MCF 10A (cell line): ENCODE measurements at regions of chr6 and their contacts with region 1.

Region 1: DNA sequence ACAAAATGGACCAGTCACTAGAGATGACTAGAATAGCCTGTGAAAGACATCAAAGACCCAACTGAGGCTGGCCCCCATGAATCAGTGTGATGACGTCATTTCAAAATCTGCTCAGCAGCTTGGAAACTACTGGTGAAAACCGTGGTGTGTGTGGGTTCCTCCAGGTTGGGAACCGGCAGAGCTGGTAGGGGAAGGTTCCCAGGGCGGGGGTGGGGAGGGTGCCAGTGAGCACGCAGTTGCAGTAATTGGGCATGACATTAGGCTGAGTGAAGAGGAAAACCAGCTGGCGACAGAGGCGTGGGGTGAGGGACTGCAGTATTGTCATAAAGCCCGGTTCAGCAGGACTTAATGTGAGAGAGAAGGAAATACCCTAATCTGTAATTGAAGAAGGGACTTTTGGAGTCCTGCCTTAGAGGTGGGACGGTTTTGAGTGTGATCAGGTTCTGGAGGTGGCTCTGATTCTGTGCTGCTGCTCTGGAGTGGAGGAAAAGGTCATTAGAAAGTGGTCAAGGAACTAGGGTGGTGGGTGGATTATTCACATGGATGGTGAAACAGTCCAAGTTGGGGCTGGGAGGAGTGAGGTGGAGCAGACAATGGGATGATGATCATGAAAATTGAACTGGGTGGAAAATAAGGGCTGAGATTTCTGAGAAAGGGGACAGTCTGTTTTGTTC is 52.0 kb upstream of the MTHFD1L start:
- DNase-seq: peak; percentile 21
- H3K4me3 Mint-ChIP-seq: peak overlapping the region; percentile 7
- H3K27ac Mint-ChIP-seq: peak overlapping the region; percentile 60
- H3K4me1 Mint-ChIP-seq: peaks cover 23% of the 10 kb centered on the region
- H3K27me3 Mint-ChIP-seq: no peaks in the 10 kb centered on the region
- CTCF ChIP-seq: no peak

Region 2: GRCh38 chr6:149903938-149904611 is 909.4 kb before region 1 on chr6:
- CTCF ChIA-PET with region 1: no interaction called
- POLR2A ChIA-PET with region 1: no interaction called
- intact Hi-C with region 1: no loop called
- DNase-seq: no peak
- H3K4me3 Mint-ChIP-seq: no peak overlapping the region
- H3K27ac Mint-ChIP-seq: no peak overlapping the region
- H3K4me1 Mint-ChIP-seq: peaks cover 18% of the 10 kb centered on the region
- H3K27me3 Mint-ChIP-seq: no peaks in the 10 kb centered on the region
- CTCF ChIP-seq: no peak

Region 3: DNA sequence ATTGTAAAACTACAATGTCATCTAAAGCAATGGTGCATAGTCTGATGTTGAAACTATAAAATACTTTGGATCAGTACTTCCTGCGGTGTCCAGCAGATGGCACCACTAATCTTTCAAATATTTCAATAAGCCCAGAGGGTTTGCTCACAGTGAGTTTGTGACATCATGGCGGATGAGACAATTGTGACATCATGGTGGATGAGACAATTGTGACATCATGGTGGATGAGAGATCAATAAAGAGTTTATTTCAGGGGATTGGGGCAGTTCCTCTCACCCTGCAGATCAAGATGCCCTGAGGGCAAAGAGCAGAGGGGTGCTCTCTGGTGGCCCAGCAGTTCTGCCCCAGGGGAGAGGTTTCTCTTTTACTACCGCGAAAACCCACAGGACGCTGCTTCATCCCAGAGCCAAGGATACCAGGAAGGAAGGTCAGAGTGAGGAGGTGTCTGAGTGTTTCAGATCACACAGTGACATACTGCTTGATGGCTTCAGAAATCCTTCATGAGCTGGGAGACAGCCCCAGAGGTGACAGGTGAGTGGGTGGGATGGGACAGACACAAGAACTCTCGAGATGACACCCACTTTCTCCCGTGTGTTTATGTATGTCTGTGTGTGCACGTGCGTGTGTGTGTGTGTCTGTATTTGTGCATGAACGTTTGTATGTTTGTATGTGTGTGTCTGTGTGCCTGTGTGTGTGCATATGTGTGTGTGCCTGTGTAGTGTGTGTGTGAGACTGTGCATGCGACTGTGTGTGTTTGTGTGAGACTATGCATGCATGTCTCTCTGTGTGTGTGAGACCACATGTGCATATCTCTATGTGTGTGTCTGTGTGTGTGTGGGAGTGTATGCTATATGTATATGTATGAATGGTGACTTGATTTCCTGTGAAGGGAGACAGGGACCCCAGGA is 879.0 kb before region 1 on chr6:
- CTCF ChIA-PET with region 1: no interaction called
- POLR2A ChIA-PET with region 1: no interaction called
- intact Hi-C with region 1: loop called (anchors 1 kb)
- DNase-seq: peak; percentile 74
- H3K4me3 Mint-ChIP-seq: no peak overlapping the region
- H3K27ac Mint-ChIP-seq: no peak overlapping the region
- H3K4me1 Mint-ChIP-seq: peaks cover 23% of the 10 kb centered on the region
- H3K27me3 Mint-ChIP-seq: peaks cover 22% of the 10 kb centered on the region
- CTCF ChIP-seq: peak; percentile 67

Region 4: DNA sequence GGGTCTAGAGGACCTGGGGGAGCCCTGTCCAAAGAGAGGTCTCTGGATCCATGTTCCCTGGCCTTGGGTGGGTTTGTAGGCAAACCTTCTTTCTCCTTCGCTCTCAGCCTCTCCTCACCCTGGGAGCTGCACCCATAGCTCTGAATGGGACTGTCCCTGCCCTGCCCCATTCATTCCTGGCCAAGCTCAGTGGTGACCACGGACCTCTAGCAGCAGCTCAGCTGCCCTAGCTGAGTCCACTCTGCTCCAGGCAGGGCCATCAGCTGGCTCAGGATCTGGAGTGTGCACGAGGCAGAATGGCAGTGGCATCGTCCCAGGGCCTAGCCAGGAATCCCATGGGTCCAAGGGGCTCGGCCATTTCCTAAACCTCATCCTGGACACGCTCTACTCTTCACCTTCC is 749.8 kb before region 1 on chr6:
- CTCF ChIA-PET with region 1: no interaction called
- POLR2A ChIA-PET with region 1: no interaction called
- intact Hi-C with region 1: no loop called
- DNase-seq: no peak
- H3K4me3 Mint-ChIP-seq: no peak overlapping the region
- H3K27ac Mint-ChIP-seq: no peak overlapping the region
- H3K4me1 Mint-ChIP-seq: no peaks in the 10 kb centered on the region
- H3K27me3 Mint-ChIP-seq: peaks cover 4% of the 10 kb centered on the region
- CTCF ChIP-seq: no peak

Region 5: DNA sequence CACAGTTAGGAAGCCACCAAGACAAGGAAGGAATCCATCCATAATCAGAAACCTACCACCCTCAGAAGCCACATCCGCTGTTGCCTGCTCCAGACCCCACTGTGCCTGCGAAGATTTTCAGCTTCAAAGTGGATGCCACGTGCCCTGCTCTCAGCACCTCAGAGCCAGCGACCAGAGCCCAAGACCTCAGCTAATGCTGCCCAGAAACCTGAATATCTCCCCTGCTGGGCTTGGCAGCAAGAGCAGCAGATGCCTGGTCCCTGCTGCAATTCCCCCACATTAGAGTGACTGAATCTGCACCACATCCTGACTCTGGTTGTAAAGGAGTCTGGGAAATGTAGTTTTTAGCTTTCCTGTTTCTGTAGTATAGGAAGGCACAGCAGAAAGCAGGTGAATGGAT is 733.9 kb before region 1 on chr6:
- CTCF ChIA-PET with region 1: interaction called, 6 read pairs
- POLR2A ChIA-PET with region 1: no interaction called
- intact Hi-C with region 1: loop called (anchors 1 kb)
- DNase-seq: no peak
- H3K4me3 Mint-ChIP-seq: no peak overlapping the region
- H3K27ac Mint-ChIP-seq: no peak overlapping the region
- H3K4me1 Mint-ChIP-seq: peaks cover 6% of the 10 kb centered on the region
- H3K27me3 Mint-ChIP-seq: peaks cover 10% of the 10 kb centered on the region
- CTCF ChIP-seq: no peak

Region 6: GRCh38 chr6:150417899-150418826 is 395.3 kb before region 1 on chr6:
- CTCF ChIA-PET with region 1: interaction called, 133 read pairs
- POLR2A ChIA-PET with region 1: interaction called, 20 read pairs
- intact Hi-C with region 1: loop called (anchors 1 kb)
- DNase-seq: peak; percentile 84
- H3K4me3 Mint-ChIP-seq: peak overlapping the region; percentile 50
- H3K27ac Mint-ChIP-seq: peak overlapping the region; percentile 85
- H3K4me1 Mint-ChIP-seq: peaks cover 21% of the 10 kb centered on the region
- H3K27me3 Mint-ChIP-seq: no peaks in the 10 kb centered on the region
- CTCF ChIP-seq: peak; percentile 73

Region 7: DNA sequence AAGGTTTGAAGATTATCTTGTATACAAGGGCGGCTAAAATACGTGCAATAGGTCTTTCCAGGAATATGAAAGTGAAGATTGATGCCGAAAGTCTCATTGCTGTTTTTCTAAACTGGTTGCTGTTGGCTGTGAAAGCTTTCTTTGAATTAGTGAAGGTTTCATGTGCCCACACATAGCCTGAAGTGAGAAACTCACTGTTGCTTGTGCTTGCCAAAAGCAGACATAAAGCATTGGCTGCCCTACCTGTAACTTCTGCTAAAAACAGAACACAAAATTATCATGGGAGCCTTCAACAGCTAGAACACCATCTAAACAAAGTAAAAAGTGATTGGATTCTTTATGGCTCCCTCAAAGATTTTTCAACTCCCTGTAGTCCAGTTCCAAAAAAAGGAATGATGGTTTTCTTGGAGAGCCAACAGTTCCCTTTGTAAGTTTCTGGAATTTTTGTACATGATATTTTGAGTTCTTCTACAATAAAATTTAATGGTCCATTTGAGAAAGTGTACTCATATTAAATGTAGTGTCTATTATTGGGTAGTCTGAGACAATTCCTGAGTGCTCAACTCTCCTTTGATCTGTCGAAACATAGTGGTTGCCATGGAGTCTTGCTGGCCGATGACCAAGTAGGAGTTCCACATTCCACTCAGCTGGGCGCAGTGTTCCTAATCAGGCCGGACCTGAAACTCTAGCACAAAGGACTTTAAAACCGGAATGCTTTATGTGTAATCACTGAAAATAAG is 145.3 kb before region 1 on chr6:
- CTCF ChIA-PET with region 1: interaction called, 3 read pairs
- POLR2A ChIA-PET with region 1: interaction called, 3 read pairs
- intact Hi-C with region 1: loop called (anchors 2 kb)
- DNase-seq: peak; percentile 94
- H3K4me3 Mint-ChIP-seq: no peak overlapping the region
- H3K27ac Mint-ChIP-seq: peak overlapping the region; percentile 24
- H3K4me1 Mint-ChIP-seq: peaks cover 18% of the 10 kb centered on the region
- H3K27me3 Mint-ChIP-seq: no peaks in the 10 kb centered on the region
- CTCF ChIP-seq: peak; percentile 13

Region 8: GRCh38 chr6:150783813-150784212 is 29.6 kb before region 1 on chr6:
- CTCF ChIA-PET with region 1: no interaction called
- POLR2A ChIA-PET with region 1: no interaction called
- intact Hi-C with region 1: no loop called
- DNase-seq: no peak
- H3K4me3 Mint-ChIP-seq: no peak overlapping the region
- H3K27ac Mint-ChIP-seq: no peak overlapping the region
- H3K4me1 Mint-ChIP-seq: no peaks in the 10 kb centered on the region
- H3K27me3 Mint-ChIP-seq: no peaks in the 10 kb centered on the region
- CTCF ChIP-seq: no peak

Region 9: DNA sequence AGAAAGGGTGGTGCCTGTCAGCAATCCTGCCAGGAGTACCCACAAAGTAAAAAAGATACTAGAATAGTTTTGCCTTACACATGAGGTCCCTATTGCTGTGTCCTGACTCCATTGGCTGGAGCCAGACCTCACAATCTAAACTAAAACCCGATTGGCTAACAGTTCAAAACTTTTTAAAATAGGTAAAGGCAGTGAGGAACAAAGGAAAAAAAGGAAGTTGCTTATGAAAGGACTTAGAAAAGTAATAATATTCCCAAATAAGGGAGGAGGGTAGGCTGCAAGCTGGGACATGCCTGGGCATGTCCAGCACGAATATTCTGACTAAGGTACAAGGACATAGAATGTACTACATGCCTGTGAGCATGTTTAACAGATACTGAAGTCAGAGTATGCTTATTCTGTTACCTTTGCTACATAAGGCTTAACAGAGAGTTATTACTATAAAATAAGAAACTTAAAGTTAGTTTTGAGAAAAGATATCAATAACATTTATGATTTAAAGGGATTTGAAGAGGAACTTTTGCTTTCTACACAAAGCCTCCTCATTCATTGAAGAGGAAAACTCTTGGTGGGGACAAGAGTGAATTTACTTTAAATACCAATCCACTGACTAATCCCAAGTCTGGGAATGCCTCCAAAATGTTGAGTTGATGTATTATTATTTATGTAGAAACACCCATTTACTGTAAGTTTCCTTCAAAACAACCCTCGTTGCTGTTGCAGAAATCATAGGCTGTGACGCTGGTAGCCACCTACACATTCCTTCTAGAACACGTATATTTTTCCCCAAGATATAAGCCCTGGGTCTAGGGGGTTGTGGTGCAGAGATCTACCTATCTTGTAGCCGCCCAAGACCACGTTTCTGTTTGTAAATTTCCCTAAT is 43.8 kb after region 1 on chr6:
- CTCF ChIA-PET with region 1: interaction called, 28 read pairs
- POLR2A ChIA-PET with region 1: interaction called, 5 read pairs
- intact Hi-C with region 1: no loop called
- DNase-seq: peak; percentile 96
- H3K4me3 Mint-ChIP-seq: peak overlapping the region; percentile 58
- H3K27ac Mint-ChIP-seq: peak overlapping the region; percentile 99
- H3K4me1 Mint-ChIP-seq: peaks cover 38% of the 10 kb centered on the region
- H3K27me3 Mint-ChIP-seq: no peaks in the 10 kb centered on the region
- CTCF ChIP-seq: no peak

Region 10: DNA sequence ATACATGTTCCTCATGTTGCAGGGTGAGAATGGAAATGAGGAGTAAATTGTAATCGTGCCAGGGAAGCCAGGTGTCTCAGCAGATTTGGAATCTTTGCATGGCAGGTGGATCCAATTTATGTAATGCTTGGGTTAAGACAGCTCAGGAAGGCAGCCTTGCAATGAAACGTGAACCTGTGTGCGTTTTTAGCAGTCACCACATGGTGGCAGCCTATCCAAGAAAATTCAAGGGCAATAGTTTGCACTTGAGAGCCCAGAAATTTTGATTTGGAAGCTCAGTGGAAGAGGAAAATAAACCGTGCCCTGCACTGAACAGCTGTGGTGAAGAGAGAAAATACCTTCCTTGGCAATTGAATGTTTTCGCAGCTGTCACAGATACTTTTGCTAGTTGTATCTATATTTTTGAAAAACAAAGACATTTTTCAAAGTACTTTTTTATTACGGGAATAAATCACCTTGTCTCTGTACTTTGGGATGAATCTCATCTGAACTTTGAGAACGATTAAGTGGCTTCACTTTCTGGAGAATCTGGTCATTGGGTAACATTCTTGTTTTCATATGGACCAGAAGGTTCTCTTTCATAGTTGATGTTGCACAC is 78.5 kb after region 1 on chr6:
- CTCF ChIA-PET with region 1: interaction called, 42 read pairs
- POLR2A ChIA-PET with region 1: no interaction called
- intact Hi-C with region 1: no loop called
- DNase-seq: peak; percentile 72
- H3K4me3 Mint-ChIP-seq: no peak overlapping the region
- H3K27ac Mint-ChIP-seq: no peak overlapping the region
- H3K4me1 Mint-ChIP-seq: peaks cover 6% of the 10 kb centered on the region
- H3K27me3 Mint-ChIP-seq: no peaks in the 10 kb centered on the region
- CTCF ChIP-seq: peak; percentile 74